Colonic mucosa (tissue), 4 donors: ENCODE measurements at regions of chr3 and their contacts with region 1.

Region 1: GRCh38 chr3:188154014-188154808 is at the start of gene LPP:
- DNase-seq: peak; percentile 80
- H3K4me3 ChIP-seq: peak within 1 kb of the TSS; percentile 75
- H3K27ac ChIP-seq: peak within 1 kb of the TSS; percentile 94
- H3K4me1 ChIP-seq: peaks cover 10% of the 10 kb centered on the region
- H3K27me3 ChIP-seq: no peaks in the 10 kb centered on the region
- CTCF ChIP-seq: no peak
- total RNA-seq, gene LPP: 170 to 246 TPM

Region 2: DNA sequence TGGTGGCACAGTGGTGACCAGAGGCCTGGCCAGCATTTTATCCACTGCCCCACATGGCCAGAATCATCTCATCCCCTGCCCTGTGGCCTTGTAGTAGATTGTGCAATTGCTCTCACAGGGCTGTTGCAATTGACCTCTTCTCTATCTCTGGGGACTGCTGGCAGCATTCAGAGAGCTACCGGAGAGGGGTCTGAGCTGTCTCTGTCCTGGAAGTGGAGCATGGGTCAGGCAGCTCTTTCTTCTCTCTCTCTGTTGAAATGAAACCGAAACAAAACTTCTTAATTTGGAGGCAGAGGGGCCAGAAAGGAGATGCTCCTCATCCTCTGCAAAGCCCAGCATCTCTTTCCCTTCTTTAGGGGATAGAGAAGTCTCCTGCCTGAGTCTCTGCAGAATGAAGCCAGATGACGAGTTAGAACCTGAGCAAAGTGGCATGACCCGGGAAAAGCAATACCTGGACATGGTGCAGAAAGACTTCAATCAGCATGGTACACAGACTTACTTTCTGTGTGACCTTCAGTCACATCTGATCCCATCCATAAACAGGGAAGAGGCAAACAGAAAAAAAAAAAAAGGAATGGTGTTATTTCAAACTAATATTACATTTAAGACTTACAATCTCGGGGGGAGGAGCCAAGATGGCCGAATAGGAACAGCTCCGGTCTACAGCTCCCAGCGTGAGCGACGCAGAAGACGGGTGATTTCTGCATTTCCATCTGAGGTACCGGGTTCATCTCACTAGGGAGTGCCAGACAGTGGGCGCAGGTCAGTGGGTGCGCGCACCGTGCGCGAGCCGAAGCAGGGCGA is 264.4 kb before region 1 on chr3:
- intact Hi-C with region 1: no loop called
- DNase-seq: no peak
- H3K4me3 ChIP-seq: no peak overlapping the region
- H3K27ac ChIP-seq: no peak overlapping the region
- H3K4me1 ChIP-seq: no peaks in the 10 kb centered on the region
- H3K27me3 ChIP-seq: no peaks in the 10 kb centered on the region
- CTCF ChIP-seq: no peak

Region 3: DNA sequence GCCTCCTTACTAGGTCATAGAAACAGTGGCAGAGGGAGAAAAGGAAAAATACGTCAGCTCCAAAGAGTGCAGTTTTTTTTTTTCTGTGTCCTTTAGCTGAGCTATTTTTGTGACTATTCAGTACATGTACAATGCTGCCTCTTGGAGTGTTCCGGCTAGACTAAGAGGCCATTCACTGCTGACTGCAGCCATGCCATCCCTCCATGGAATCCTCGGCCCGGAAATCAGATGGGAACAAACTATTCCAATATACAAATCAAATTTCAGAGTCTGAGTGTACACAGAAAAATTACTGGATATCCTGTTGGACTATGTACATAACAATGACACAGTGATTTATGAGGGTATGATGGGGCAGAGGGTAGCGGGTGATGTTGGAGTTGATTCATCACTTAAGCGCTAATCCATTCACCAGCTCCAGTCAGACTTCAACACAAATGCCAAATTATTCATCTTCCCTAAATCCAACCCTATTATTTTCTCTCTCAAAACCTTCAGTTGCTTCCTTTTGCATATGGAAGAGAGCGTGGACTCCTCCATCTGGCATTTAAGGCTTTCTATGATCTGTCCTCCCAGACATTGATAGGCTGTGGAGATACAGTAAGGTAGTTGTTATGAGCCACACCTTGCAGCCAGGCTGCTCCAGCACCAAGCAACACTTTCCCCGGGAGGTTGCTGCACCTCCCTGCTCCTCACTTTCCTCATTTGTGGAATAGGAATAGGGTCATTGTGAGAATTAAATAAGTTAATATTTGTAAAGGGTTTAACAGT is 108.9 kb after region 1 on chr3:
- intact Hi-C with region 1: loop called (anchors 10 kb)
- DNase-seq: no peak
- H3K4me3 ChIP-seq: no peak overlapping the region
- H3K27ac ChIP-seq: peak overlapping the region; percentile 30
- H3K4me1 ChIP-seq: peaks cover 20% of the 10 kb centered on the region
- H3K27me3 ChIP-seq: no peaks in the 10 kb centered on the region
- CTCF ChIP-seq: no peak

Region 4: GRCh38 chr3:188853856-188854771 is 699.9 kb after region 1 on chr3:
- intact Hi-C with region 1: no loop called
- DNase-seq: no peak
- H3K4me3 ChIP-seq: no peak overlapping the region
- H3K27ac ChIP-seq: no peak overlapping the region
- H3K4me1 ChIP-seq: no peaks in the 10 kb centered on the region
- H3K27me3 ChIP-seq: no peaks in the 10 kb centered on the region
- CTCF ChIP-seq: no peak